Activated CD8-positive, alpha-beta memory T cell treated with anti-CD3 and anti-CD28 coated beads, Interleukin-2, amount 10 ng/mL, durations not matched to agents 7 days and 5 days (primary cell): ENCODE measurements at regions of chr19 and their contacts with region 1.

Region 1: GRCh38 chr19:3108775-3109174 is 14.6 kb downstream of the GNA11 start:
- DNase-seq: peak; percentile 81
- ATAC-seq: peak; percentile 84
- H3K4me3 Mint-ChIP-seq: no peak overlapping the region
- H3K27ac Mint-ChIP-seq: no peak overlapping the region
- H3K4me1 Mint-ChIP-seq: peaks cover 9% of the 10 kb centered on the region
- H3K27me3 Mint-ChIP-seq: no peaks in the 10 kb centered on the region

Region 2: DNA sequence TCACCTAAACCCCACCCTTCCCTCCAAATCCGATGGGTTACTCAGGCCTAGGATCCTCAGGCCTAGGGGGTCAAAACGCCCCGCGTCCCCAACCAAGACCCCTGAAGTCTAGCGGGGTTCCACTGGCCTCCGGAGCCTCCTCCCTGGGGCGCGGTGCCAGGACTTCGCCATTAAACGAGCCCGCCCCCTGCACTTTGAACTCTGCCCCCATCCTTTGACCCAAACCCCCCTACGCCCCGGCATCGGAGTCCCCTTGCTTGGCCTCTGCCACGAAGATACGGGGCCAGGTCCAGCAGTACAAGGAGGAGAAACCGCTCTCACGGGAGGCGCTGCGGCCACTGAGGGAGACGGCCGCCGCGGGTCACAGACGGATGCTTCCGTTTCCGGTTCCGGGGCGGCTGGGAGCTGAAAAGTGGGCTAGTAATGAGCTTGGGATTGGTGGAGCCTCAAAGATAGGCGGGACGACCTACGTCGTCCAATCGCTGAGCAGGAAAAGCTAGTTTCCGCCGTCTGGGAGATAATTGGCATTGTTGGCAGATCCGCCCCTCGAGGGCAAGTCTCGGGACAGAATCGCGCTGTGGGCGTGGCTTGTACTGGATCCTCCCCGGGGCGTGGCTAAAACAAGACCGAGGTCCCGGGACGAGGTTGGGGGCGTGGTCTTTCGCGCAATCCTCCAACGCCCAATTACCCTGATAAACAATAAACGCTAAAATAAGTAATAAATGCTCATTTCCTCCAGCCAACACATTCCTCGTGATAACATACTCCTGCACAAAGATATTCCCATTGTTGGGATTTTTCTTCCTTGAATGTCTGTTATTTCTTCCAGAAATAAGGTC is 158.3 kb before region 1 on chr19:
- CTCF ChIA-PET with region 1: interaction called, 83 read pairs
- DNase-seq: peak; percentile 100
- ATAC-seq: peak; percentile 98
- H3K4me3 Mint-ChIP-seq: peak overlapping the region; percentile 94
- H3K27ac Mint-ChIP-seq: peak overlapping the region; percentile 97
- H3K4me1 Mint-ChIP-seq: peaks cover 38% of the 10 kb centered on the region
- H3K27me3 Mint-ChIP-seq: no peaks in the 10 kb centered on the region

Region 3: GRCh38 chr19:2969104-2969504 is 139.7 kb before region 1 on chr19:
- CTCF ChIA-PET with region 1: interaction called, 20 read pairs
- DNase-seq: no peak
- ATAC-seq: no peak
- H3K4me3 Mint-ChIP-seq: no peak overlapping the region
- H3K27ac Mint-ChIP-seq: no peak overlapping the region
- H3K4me1 Mint-ChIP-seq: no peaks in the 10 kb centered on the region
- H3K27me3 Mint-ChIP-seq: peaks cover under 1% of the 10 kb centered on the region

Region 4: DNA sequence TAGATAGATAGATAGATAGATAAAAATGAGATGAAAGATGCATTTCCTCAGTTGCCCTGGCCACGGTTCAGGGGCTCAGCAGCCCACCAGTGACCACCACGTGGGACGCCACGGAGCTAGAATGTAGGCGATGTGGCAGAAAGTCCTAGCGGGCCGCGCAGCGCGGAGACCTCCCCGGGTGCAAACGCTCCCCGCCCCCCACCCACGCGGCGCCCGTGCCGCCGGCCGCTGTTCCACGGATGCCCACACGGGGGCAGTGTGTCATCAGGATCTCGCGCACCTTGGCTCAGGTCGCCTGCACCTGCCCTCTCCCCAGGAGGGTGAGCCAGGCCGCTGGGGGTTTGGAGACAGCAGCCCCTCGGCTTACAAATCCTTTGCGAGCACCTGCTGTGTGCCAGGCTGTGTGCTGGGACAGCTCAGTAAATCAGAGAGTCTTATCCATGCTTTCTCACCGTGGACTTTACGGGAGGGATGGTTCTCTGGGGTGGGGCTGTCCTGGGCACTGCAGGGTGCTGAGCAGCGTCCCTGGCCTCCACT is 32.8 kb before region 1 on chr19:
- CTCF ChIA-PET with region 1: interaction called, 54 read pairs
- DNase-seq: peak; percentile 73
- ATAC-seq: peak; percentile 80
- H3K4me3 Mint-ChIP-seq: no peak overlapping the region
- H3K27ac Mint-ChIP-seq: no peak overlapping the region
- H3K4me1 Mint-ChIP-seq: peaks cover 3% of the 10 kb centered on the region
- H3K27me3 Mint-ChIP-seq: no peaks in the 10 kb centered on the region

Region 5: DNA sequence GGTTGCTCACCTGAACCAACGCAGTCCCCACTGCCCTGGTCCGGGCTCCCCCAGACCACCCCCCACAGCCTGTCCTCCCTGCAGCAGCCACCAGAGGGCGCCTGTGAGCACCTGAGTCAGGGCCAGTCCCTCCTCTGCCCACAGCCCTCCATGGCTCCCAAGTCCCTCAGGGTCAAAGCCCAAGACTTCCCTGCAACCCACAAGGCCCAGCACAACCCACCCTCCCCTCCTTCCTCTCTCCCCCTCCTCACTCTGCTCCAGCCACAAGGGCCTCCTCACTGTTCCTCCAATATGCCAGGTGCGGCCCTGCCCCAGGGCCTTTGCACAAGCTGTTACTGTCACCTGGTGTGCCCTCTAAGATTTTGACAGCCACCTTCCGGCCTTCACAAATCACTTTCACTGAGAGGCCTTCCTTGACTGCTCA is 37.9 kb after region 1 on chr19:
- CTCF ChIA-PET with region 1: interaction called, 22 read pairs
- DNase-seq: peak; percentile 68
- ATAC-seq: peak; percentile 69
- H3K4me3 Mint-ChIP-seq: no peak overlapping the region
- H3K27ac Mint-ChIP-seq: peak overlapping the region; percentile 43
- H3K4me1 Mint-ChIP-seq: peaks cover 26% of the 10 kb centered on the region
- H3K27me3 Mint-ChIP-seq: no peaks in the 10 kb centered on the region

Region 6: DNA sequence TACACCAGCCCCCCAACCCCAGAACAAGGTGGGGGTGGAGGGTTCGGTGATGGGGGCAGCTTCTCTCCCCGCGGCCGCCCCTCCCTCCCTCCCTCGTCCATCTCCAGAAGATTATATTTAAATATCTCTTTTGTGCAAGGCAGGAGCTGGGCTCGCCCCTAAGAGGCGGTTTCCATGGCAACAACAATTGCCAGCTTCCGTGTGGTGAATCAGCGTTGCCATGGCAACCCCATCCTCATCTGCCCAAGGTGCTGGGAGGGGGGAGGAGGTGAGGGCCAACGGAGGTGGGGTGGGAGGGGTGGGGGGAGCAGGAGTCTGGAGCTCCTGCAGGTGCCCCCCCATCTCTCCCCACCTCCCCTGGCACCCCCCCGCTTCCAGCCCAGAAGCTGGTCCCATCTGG is 162.1 kb after region 1 on chr19:
- CTCF ChIA-PET with region 1: no interaction called
- DNase-seq: peak; percentile 62
- ATAC-seq: no peak
- H3K4me3 Mint-ChIP-seq: no peak overlapping the region
- H3K27ac Mint-ChIP-seq: no peak overlapping the region
- H3K4me1 Mint-ChIP-seq: peaks cover 12% of the 10 kb centered on the region
- H3K27me3 Mint-ChIP-seq: peaks cover 33% of the 10 kb centered on the region